Activated naive CD4-positive, alpha-beta T cell treated with anti-CD3 and anti-CD28 coated beads for 36 hours (primary cell): ENCODE measurements at regions of chr7 and their contacts with region 1.

Region 1: DNA sequence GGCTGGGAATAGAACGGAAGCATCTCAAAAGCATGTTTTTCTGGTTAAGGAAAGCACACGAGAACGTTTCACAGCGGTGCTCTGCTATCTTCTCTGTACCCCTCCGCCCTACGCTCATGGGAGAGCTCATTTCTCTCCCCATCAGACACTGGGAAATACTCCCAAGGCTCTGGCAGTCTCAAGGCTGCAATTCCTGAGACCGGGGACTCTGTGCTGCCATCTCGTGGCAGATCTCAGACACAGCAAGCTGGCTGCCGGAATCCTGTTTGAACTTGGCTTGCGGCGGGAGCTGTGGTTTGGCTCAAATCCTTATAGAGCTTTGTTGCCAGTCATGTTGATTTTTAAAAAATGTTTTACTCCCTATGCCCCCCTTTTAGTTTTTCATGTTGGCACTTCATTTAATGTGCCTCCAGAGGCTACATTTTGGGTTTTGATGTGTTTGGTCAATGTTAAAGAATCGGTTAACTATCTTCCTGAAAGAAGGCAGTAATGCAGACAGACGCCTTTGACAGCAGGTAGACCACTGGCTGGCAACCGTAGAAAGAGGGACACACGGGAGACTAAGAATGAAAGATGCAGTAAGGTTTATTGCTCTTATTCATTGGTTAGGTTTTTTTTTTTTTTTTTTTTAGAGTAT is 27.6 kb downstream of the BMPER start:
- DNase-seq: peak; percentile 77
- H3K4me3 Mint-ChIP-seq: no peak overlapping the region
- H3K27ac Mint-ChIP-seq: no peak overlapping the region
- H3K4me1 Mint-ChIP-seq: no peaks in the 10 kb centered on the region
- H3K27me3 Mint-ChIP-seq: peaks cover 20% of the 10 kb centered on the region

Region 2: GRCh38 chr7:32694182-32694581 is 1238.8 kb before region 1 on chr7:
- CTCF ChIA-PET with region 1: no interaction called
- intact Hi-C with region 1: loop called (anchors 2 kb)
- DNase-seq: no peak
- H3K4me3 Mint-ChIP-seq: no peak overlapping the region
- H3K27ac Mint-ChIP-seq: no peak overlapping the region
- H3K4me1 Mint-ChIP-seq: peaks cover 8% of the 10 kb centered on the region
- H3K27me3 Mint-ChIP-seq: peaks cover 2% of the 10 kb centered on the region

Region 3: GRCh38 chr7:33185786-33186185 is 747.2 kb before region 1 on chr7:
- CTCF ChIA-PET with region 1: interaction called, 7 read pairs
- intact Hi-C with region 1: loop called (anchors 1 kb)
- DNase-seq: peak; percentile 15
- H3K4me3 Mint-ChIP-seq: no peak overlapping the region
- H3K27ac Mint-ChIP-seq: no peak overlapping the region
- H3K4me1 Mint-ChIP-seq: peaks cover 8% of the 10 kb centered on the region
- H3K27me3 Mint-ChIP-seq: no peaks in the 10 kb centered on the region

Region 4: DNA sequence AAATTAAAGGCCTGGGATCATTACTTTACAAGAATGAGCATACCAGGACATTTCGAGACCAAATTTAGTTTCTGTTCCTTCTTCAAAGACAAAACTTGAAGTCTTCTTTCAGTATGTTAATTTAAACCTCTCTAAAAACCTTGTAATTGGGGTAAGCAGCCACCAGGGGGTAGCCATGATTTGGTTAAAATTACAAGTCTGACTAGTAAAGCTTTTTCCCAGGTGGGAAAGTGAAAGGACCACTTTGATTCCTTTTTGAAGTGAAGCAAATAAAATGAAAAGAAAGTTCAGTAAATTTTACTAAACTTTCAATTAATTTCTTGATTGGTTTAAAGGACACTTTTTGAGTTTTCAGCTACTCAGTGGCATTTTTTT is 509.3 kb before region 1 on chr7:
- CTCF ChIA-PET with region 1: interaction called, 3 read pairs
- intact Hi-C with region 1: loop called (anchors 1 kb)
- DNase-seq: peak; percentile 39
- H3K4me3 Mint-ChIP-seq: no peak overlapping the region
- H3K27ac Mint-ChIP-seq: no peak overlapping the region
- H3K4me1 Mint-ChIP-seq: no peaks in the 10 kb centered on the region
- H3K27me3 Mint-ChIP-seq: no peaks in the 10 kb centered on the region

Region 5: GRCh38 chr7:33511778-33512177 is 421.2 kb before region 1 on chr7:
- CTCF ChIA-PET with region 1: no interaction called
- intact Hi-C with region 1: no loop called
- DNase-seq: no peak
- H3K4me3 Mint-ChIP-seq: no peak overlapping the region
- H3K27ac Mint-ChIP-seq: no peak overlapping the region
- H3K4me1 Mint-ChIP-seq: no peaks in the 10 kb centered on the region
- H3K27me3 Mint-ChIP-seq: no peaks in the 10 kb centered on the region

Region 6: DNA sequence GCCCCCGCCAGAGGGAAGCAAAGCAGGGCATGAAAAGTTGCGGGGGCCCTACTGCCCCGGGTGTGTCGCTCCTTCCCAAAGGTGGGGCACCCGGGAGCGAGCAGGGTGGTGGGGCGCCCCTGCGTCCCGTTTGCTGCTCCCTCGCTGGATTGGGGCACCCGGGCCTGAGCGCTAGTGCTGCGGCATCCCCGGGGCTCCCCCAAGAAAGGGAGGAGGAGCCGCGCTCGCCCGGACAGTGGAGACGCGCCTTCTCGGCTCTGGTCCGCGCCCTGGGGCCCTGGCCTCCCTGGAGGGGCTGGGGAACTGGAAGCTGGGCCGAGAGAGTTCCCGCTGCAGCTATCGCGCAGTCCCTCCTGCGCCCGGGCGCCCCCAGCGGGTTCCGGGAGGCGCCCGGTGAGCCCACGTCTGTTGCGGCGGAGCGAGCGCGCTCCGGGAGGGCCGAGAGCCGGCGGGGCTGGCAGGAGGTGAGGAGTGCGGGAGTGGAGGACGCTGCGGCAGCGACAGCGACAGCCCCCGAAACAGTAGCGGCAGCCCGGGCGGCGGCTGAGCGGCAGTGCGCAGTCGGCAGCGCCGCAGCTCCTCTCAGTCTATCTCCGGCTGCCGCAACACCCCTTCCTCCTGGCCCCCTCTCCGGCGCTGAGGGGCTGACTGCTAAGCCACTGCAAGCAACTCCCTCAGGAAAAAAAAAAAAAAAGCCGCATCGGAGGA is 28.1 kb before region 1 on chr7:
- CTCF ChIA-PET with region 1: interaction called, 8 read pairs
- intact Hi-C with region 1: loop called (anchors 1 kb)
- DNase-seq: peak; percentile 24
- H3K4me3 Mint-ChIP-seq: peak overlapping the region; percentile 70
- H3K27ac Mint-ChIP-seq: no peak overlapping the region
- H3K4me1 Mint-ChIP-seq: peaks cover 6% of the 10 kb centered on the region
- H3K27me3 Mint-ChIP-seq: peaks cover 62% of the 10 kb centered on the region